HepG2 (cell line): ENCODE measurements at regions of chr4 and their contacts with region 1.

Region 1: GRCh38 chr4:94207469-94208224 is at the start of gene SMARCAD1:
- DNase-seq: peak; percentile 91
- ATAC-seq: peak; percentile 98
- H3K4me3 ChIP-seq: peak within 1 kb of the TSS; percentile 77 to 81 (median 79)
- H3K27ac ChIP-seq: peak within 1 kb of the TSS; percentile 94
- H3K4me1 ChIP-seq: peaks cover 29% of the 10 kb centered on the region
- H3K27me3 ChIP-seq: no peaks in the 10 kb centered on the region; a peak in 1 of 5 replicates
- CTCF ChIP-seq: 0 out of 2 replicates have a peak, but pooled peaks have one; percentile 13
- EP300 ChIP-seq: peak in 1 of 2 experiments; percentile 8; a peak in 1 of 4 replicates
- POLR2A ChIP-seq: peak; percentile 70 to 88
- RAD21 ChIP-seq: no peak
- total RNA-seq, gene SMARCAD1: 35.9 and 52.8 TPM in 2 replicates

Region 2: DNA sequence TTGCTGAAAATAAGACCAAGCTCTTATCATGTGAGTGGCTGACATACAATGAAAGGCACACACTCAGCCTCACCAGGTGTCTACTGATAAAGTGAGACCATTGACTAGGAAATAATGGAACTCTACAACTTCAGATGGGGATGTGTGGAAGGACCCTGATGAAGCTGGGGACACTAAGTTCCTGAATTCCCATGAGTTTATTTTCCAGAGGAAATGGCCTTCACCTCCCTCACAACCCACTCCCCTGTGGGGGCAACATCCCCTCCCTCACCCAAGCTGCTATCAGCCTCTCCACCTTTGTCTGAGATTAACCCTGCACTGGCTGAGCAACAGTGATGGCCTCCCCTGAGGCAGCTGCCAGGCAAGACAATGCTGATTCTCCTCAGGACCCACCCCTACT is 55.2 kb before region 1 on chr4:
- CTCF ChIA-PET with region 1: no interaction called
- POLR2A ChIA-PET with region 1: interaction called, 3 read pairs
- in situ Hi-C with region 1: no loop called
- intact Hi-C with region 1: loop called (anchors 1 kb)
- DNase-seq: no peak
- ATAC-seq: no peak
- H3K4me3 ChIP-seq: no peak overlapping the region
- H3K27ac ChIP-seq: no peak overlapping the region
- H3K4me1 ChIP-seq: peaks cover 8% of the 10 kb centered on the region
- H3K27me3 ChIP-seq: 0 out of 5 replicates have a peak, but pooled peaks cover 0 to 4% of the 10 kb centered on the region in 2 experiments
- CTCF ChIP-seq: no peak
- EP300 ChIP-seq: no peak
- POLR2A ChIP-seq: no peak
- RAD21 ChIP-seq: no peak

Region 3: DNA sequence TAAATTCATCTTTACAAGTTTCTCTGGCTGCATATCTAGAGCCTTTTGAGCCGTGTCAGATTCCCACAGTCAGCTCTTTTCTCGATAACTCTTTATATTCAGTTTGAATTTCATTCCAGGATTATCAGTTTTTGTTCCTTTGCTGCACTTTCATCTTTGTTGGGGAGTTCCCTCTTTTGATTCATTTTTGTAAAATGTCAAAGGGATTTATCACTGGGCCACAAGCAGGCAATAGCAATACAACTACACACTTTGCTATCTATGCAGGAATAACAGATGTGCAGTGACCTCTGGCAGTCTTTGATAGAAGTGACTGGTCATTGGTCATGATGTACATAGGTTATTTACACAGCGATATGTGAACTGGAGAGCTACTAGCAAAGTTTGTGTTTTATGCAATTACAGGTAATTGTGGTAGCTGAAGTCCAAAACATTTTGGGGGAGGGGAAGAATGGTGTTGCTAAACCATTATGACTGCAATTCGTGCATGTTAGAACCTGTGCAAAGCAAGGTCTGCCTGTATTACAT is 91.1 kb after region 1 on chr4:
- CTCF ChIA-PET with region 1: no interaction called
- POLR2A ChIA-PET with region 1: interaction called, 4 read pairs
- in situ Hi-C with region 1: no loop called
- intact Hi-C with region 1: loop called (anchors 5 kb)
- DNase-seq: peak; percentile 82
- ATAC-seq: peak; percentile 100
- H3K4me3 ChIP-seq: peak overlapping the region in 2 of 3 experiments; percentile 20 to 26; a peak in 2 of 6 replicates
- H3K27ac ChIP-seq: peak overlapping the region; percentile 51
- H3K4me1 ChIP-seq: peaks cover 18% of the 10 kb centered on the region
- H3K27me3 ChIP-seq: no peaks in the 10 kb centered on the region
- CTCF ChIP-seq: peak; percentile 55
- EP300 ChIP-seq: peak in 1 of 2 experiments; percentile 78; a peak in 2 of 4 replicates
- POLR2A ChIP-seq: no peak
- RAD21 ChIP-seq: no peak